Activated naive CD4-positive, alpha-beta T cell treated with anti-CD3 and anti-CD28 coated beads, Interleukin-2, amount 10 ng/mL, durations not matched to agents 7 days and 5 days (primary cell): ENCODE measurements at regions of chrX and their contacts with region 1.

Region 1: GRCh38 chrX:112642349-112642748 is 37.4 kb downstream of the LHFPL1 start:
- DNase-seq: peak; percentile 25
- H3K4me3 Mint-ChIP-seq: no peak overlapping the region
- H3K27ac Mint-ChIP-seq: no peak overlapping the region
- H3K4me1 Mint-ChIP-seq: peaks cover 12% of the 10 kb centered on the region
- H3K27me3 Mint-ChIP-seq: no peaks in the 10 kb centered on the region

Region 2: GRCh38 chrX:111869639-111870034 is 772.7 kb before region 1 on chrX:
- CTCF ChIA-PET with region 1: interaction called, 11 read pairs
- DNase-seq: peak; percentile 20
- H3K4me3 Mint-ChIP-seq: no peak overlapping the region
- H3K27ac Mint-ChIP-seq: no peak overlapping the region
- H3K4me1 Mint-ChIP-seq: peaks cover 2% of the 10 kb centered on the region
- H3K27me3 Mint-ChIP-seq: peaks cover 4% of the 10 kb centered on the region